ENCODE measurements at regions of chr2 and their contacts with region 1.

Region 1: GRCh38 chr2:51693640-51694039 is 661.7 kb upstream of the NRXN1 start:
- DNase-seq: no peak
- H3K4me3 ChIP-seq: no peak overlapping the region
- CTCF ChIP-seq: no peak
- POLR2A ChIP-seq: no peak

Region 2: GRCh38 chr2:51039581-51039980 is 654.1 kb before region 1 on chr2:
- intact Hi-C with region 1: no loop called
- DNase-seq: no peak
- H3K4me3 ChIP-seq: no peak overlapping the region
- CTCF ChIP-seq: no peak
- POLR2A ChIP-seq: no peak

Region 3: DNA sequence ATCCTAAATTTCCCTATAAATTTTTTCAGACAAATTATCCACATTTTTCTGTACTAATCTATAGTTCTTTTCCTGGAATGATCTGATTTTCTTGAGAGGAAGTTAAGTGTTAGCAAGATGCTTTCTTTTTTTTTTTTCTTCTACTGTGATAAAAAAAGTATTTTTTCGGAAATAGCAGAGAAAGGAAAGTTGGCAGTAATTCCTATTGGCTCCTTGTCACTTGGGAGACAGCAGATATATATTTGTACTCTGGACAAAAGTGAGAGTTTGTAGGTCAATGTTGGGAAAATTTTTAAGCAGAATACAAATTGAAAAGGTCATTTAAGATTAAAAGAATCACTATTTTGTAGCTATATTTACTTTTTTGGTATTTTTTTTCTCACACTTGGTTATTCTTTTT is 26.0 kb before region 1 on chr2:
- intact Hi-C with region 1: no loop called
- DNase-seq: no peak
- H3K4me3 ChIP-seq: no peak overlapping the region
- CTCF ChIP-seq: no peak
- POLR2A ChIP-seq: no peak

Region 4: GRCh38 chr2:51711766-51712165 is 18.1 kb after region 1 on chr2:
- intact Hi-C with region 1: loop called (anchors 2 kb)
- DNase-seq: no peak
- H3K4me3 ChIP-seq: no peak overlapping the region
- CTCF ChIP-seq: no peak
- POLR2A ChIP-seq: no peak